PC-9 (cell line): ENCODE measurements at regions of chr11 and their contacts with region 1.

Region 1: GRCh38 chr11:44286268-44286880 is 23.6 kb downstream of the ALX4 start:
- DNase-seq: peak; percentile 39 to 44
- H3K4me3 ChIP-seq: no peak overlapping the region
- H3K27ac ChIP-seq: no peak overlapping the region
- H3K4me1 ChIP-seq: no peaks in the 10 kb centered on the region
- H3K27me3 ChIP-seq: peaks cover 26% of the 10 kb centered on the region
- CTCF ChIP-seq: peak; percentile 100

Region 2: DNA sequence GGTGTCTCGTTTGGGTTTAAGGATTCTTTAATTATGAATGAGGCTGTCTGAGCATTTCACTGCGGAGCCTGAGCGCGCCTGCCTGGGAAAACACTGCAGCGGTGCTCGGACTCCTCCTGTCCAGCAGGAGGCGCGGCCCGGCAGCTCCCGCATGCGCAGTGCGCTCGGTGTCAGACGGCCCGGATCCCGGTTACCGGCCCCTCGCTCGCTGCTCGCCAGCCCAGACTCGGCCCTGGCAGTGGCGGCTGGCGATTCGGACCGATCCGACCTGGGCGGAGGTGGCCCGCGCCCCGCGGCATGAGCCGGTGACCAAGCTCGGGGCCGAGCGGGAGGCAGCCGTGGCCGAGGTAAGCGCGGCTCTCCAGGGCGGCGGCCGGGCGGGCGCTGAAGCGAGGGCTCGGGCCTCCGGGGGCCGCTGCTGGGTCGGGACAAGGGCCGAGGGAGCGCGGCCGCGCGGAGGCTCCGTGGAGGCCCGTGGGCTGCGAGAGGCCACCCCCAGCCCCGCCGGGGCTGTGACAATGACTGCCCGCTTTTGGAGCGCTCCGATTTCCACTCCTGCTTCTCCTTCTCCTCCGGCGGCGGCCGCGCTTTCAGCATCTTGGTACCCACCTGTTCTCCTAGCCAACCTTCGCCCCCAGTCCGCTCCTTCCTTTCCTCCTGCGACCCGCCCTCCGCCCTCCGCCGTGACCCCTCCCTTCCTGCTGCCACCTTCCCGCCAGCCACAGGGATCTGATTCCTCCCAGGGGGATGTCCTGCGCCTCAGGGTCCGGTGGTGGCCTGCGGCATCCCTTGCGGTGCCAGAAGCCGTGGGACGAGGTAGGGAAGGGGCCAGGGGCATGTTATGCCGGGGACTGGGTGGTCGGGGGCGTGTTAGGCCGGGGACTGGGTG is 190.6 kb before region 1 on chr11 and contains the start of gene EXT2:
- CTCF ChIA-PET with region 1: no interaction called
- POLR2A ChIA-PET with region 1: no interaction called
- intact Hi-C with region 1: loop called (anchors 10 kb)
- DNase-seq: peak; percentile 60 to 88
- H3K4me3 ChIP-seq: peak within 1 kb of the TSS; percentile 82
- H3K27ac ChIP-seq: peak within 1 kb of the TSS; percentile 41
- H3K4me1 ChIP-seq: peaks cover 16% of the 10 kb centered on the region
- H3K27me3 ChIP-seq: no peaks in the 10 kb centered on the region
- CTCF ChIP-seq: peak; percentile 87
- total RNA-seq, gene EXT2: 72.4 and 74.8 TPM in 2 replicates

Region 3: DNA sequence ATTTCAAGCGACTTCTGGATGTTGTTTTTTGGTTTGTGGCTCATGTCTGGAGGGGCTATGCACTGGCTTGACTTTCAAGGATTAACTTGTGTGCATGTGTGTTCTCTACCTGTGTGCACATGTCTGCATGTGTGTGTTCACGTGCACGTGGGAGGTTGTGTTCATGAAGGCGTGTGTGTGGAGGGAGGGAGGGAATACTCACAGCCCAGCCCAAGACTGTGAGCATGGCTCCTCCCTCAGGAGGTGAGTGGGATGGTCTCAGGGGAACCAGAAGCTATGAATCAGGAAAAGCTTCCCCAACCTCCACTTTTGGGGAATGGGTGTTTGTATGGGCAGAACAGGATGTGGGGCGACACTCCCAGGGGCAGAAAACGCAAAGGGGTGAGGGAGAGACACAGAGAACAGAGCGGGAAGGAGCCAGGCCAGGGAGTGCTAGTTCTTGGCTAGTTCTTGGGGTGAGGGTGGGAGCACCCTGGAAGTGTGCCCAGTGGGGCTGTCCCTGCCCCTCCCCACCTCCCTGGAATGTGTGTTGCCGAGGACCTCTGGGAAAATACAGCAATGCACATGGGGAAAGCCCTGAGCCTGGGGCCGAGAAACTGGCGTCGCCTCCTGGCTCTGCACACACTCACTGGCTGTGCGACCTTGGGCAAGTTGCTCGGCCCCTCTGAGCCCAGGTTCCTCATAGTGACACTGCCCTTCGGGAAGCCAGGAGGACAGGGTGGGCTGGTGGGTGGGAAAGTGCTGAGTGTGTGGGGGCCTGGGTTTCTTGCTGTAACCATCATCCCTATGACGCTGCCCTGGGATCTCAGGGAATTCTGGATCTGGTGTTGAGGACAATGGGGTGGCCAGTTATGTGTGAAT is 40.5 kb after region 1 on chr11:
- CTCF ChIA-PET with region 1: no interaction called
- POLR2A ChIA-PET with region 1: no interaction called
- intact Hi-C with region 1: loop called (anchors 2 kb)
- DNase-seq: peak in 1 of 2 experiments; percentile 15
- H3K4me3 ChIP-seq: no peak overlapping the region
- H3K27ac ChIP-seq: no peak overlapping the region
- H3K4me1 ChIP-seq: no peaks in the 10 kb centered on the region
- H3K27me3 ChIP-seq: peaks cover 88% of the 10 kb centered on the region
- CTCF ChIP-seq: no peak

Region 4: DNA sequence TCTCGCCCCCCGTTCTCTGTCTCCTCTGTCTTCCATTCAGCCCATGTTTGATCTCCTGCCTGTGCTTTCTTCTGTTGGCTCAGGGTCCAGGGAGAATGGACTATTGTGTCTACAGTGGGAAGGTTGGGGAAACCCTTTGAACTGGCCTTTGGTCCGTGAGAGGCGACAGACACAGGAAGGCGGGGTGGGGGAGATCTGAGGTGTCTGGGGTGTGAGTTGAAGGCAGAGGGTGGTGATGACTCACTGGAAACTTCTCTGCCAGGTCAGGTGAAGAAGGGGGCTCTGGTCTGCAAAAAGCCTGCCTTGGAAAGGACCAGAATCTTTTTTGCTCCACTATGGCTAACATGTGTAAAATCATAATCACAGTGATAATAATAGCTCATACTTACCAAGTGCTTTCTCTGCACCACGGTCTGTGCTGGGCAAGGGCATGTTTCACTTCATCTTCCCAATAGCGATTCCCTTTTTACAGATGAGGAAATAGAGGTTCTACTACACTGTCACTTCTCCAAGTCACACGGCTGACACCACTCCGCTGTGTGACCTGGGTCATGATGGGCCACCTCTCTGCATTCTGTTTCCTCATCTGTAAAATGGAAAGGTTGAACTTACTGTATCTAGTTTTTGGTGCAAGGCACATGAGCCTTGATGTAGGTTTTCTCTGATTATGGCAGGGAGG is 123.3 kb after region 1 on chr11:
- CTCF ChIA-PET with region 1: no interaction called
- POLR2A ChIA-PET with region 1: no interaction called
- intact Hi-C with region 1: no loop called
- DNase-seq: peak in 1 of 2 experiments; percentile 5
- H3K4me3 ChIP-seq: no peak overlapping the region
- H3K27ac ChIP-seq: no peak overlapping the region
- H3K4me1 ChIP-seq: no peaks in the 10 kb centered on the region
- H3K27me3 ChIP-seq: peaks cover 25% of the 10 kb centered on the region; the same call in 1 of the 2 replicates
- CTCF ChIP-seq: no peak

Region 5: DNA sequence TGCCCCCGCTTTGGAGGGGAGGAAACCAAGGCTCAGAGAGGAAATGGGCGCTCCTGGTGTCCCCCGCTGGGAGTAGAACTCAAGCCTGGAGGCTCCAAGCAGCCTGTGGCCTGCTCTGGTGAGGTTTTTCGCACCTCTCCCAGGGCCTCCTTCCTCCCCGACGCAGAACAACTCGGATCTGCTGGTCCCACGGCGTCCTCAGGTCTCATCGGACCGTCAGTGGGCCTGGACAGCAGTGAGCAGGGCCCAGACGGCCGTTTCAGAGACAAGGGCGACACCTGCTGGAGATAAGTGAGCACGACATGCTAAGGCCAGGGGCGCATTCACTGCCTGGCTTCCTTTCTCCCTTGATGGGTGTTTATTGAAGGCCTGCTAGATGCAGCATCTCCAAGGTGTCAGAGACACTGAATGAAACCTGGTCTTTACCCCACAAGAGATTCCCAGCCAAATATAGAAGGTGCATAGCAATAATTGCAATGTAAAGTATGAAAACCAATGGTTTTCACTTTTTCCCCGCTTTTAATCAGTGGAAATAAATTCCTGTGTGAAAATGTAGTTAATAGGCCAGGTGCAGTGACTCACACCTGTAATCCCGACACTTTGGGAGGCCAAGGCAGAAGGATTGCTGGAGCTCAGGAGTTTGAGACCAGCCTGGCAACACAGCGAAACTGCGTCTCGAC is 252.1 kb after region 1 on chr11:
- CTCF ChIA-PET with region 1: no interaction called
- POLR2A ChIA-PET with region 1: no interaction called
- intact Hi-C with region 1: loop called (anchors 1 kb)
- DNase-seq: peak; percentile 43 to 75
- H3K4me3 ChIP-seq: no peak overlapping the region
- H3K27ac ChIP-seq: no peak overlapping the region
- H3K4me1 ChIP-seq: no peaks in the 10 kb centered on the region
- H3K27me3 ChIP-seq: peaks cover 8% of the 10 kb centered on the region
- CTCF ChIP-seq: peak; percentile 99

Region 6: DNA sequence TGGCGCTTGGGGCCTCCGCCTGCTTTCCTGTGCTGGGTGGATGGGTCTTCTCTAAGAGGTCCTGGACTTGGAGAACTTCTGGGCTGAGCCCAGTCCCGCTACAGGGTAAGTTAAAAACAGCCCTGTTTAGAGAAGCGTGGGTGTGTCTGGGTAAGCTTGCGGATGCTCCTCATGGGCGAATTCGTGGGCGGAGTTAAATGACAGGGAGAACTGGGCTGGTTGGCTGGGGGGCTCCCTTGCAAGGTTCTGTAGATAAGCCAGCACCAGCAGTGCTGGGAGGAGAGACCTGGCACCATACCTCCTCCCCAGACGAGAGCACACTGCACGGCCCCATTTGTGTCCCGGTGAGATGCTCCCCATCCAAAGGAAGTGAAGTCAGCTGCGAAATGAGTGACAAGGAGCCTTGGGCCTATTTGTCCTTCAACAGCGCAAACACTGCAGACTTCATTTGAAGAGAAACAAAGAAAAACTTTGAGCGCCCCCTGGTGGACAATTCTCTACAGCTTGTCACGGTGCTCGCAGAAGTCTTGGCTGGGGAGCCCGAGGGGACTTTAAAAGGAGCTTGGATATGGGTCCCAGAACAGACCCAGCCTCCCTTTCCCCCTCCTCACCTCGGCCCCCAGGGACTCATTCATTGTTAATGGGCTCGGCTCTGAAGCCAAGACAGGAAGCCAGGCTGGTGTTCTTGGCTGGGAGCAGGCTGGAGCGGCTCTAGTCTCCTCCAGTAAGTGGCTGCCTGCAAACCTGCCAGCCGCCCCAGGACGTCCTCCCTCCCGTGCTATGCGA is 624.8 kb after region 1 on chr11:
- CTCF ChIA-PET with region 1: no interaction called
- POLR2A ChIA-PET with region 1: no interaction called
- intact Hi-C with region 1: loop called (anchors 10 kb)
- DNase-seq: peak; percentile 59 to 69
- H3K4me3 ChIP-seq: no peak overlapping the region
- H3K27ac ChIP-seq: no peak overlapping the region
- H3K4me1 ChIP-seq: no peaks in the 10 kb centered on the region
- H3K27me3 ChIP-seq: peaks cover 46% of the 10 kb centered on the region
- CTCF ChIP-seq: peak; percentile 95